ENCODE measurements at regions of chr17 and their contacts with region 1.

Region 1: DNA sequence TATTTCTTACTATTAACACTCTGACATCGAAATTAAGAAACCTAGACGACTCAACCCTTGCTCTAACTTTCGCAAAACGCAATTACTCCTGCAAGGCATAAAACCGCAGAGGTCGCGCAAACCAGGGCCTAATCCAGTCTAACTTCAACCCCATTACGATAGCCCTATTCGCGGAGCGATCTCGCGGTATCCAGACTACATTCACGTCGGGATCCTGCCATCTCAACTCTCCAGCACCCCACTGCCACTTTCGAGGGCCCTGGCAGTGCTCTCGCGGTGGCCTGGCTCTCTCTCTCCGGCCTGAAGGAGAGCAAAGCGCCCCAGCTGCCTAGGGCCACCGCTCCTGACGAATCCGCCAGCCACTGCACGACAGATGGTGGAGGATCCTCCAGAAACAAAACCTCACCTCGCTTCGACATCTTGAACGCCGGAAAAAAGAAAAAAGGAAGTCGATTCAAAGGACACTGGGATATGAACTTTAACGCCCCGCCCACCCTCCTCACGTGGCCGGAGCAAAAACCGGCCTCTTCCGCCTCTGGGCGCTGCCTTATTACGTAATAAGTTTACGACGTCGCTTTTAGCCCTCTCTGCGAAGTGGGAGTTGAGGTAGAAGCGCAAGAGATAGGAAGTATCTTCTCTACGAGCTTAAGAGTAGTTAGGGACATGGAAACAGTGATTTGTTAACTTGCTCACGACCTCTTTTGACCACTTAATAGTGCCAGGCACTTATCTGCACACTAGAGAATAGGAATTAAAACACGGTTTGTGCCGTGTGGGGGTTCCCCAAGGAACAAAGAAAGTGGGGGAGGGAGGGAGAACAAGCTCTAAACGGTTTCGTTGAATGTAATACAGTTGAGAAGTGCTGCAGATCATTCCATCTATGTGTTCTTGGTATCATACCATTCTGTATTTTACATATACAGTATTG is at the start of gene RPL23:
- DNase-seq: peak; percentile 67 to 94 (median 91)
- ATAC-seq: peak; percentile 91
- H3K4me3 ChIP-seq: peak within 1 kb of the TSS; percentile 70
- H3K4me3 Mint-ChIP-seq: peak within 1 kb of the TSS; percentile 82 to 98 (median 96)
- H3K27ac ChIP-seq: peak within 1 kb of the TSS; percentile 89
- H3K27ac Mint-ChIP-seq: peak within 1 kb of the TSS; percentile 96 to 100 (median 99)
- H3K4me1 ChIP-seq: peaks cover 16 to 25% of the 10 kb centered on the region in 2 donors
- H3K4me1 Mint-ChIP-seq: peaks cover 34 to 53% (median 45%) of the 10 kb centered on the region in 7 donors
- H3K27me3 ChIP-seq: no peaks in the 10 kb centered on the region
- H3K27me3 Mint-ChIP-seq: no peaks in the 10 kb centered on the region
- total RNA-seq, gene RPL23: 1,312 to 2,438 (median 1,877) TPM

Region 2: GRCh38 chr17:38761612-38762011 is 91.9 kb before region 1 on chr17:
- CTCF ChIA-PET with region 1: no interaction called
- POLR2A ChIA-PET with region 1: no interaction called
- intact Hi-C with region 1: no loop called
- DNase-seq: peak in 5 of 9 donors; percentile 19 to 32 (median 25)
- ATAC-seq: no peak
- H3K4me3 ChIP-seq: no peak overlapping the region
- H3K4me3 Mint-ChIP-seq: no peak overlapping the region
- H3K27ac ChIP-seq: no peak overlapping the region
- H3K27ac Mint-ChIP-seq: peak overlapping the region in 7 of 9 donors; percentile 24 to 74 (median 54)
- H3K4me1 ChIP-seq: no peaks in the 10 kb centered on the region
- H3K4me1 Mint-ChIP-seq: peaks cover 8 to 14% (median 11%) of the 10 kb centered on the region in 7 donors
- H3K27me3 ChIP-seq: no peaks in the 10 kb centered on the region
- H3K27me3 Mint-ChIP-seq: no peaks in the 10 kb centered on the region

Region 3: DNA sequence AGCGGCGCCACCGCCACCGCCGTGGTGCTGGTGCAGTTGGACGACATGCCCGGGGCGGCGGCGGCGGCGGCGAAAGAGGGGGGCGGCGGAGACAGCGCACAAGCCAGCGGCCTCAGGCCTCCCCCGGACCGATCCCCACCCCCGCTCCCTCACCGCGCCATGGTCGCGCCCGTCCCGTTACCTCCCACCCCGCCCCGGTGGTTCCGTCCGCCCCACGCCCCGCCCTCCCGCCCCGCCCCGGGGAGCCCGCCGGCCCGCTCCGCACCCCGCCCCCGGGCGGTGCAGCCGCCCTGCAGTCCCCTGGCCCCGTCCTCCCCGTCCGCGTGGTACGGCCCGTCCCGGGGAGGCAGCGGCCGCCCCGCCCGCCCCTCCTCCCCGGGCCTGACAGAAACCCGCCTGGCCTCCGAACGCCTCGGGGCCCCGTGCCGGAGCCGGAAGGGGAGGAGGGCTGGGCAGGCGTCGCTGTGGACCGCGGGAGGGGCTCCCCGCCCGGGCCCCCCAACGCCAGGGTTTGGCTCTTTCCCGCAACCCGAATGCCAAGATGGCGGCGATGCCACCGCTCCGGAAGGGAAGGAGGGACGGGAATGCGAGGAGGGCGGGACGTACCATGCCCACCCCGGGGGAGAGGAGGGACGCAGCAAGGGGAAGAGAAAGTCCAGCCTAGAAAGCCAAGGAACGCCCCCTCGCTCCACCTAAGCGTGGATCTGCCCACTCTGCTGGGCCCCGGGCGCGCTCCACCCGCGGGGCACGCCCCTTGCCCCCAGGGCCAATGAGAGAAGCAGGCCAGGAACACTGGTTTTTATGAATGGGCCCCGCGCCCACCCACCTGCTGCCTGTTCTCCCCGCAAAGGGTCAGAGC is 53.9 kb before region 1 on chr17 and contains the start of gene PIP4K2B:
- CTCF ChIA-PET with region 1: interaction called, 5 read pairs
- POLR2A ChIA-PET with region 1: interaction called, 8 read pairs
- intact Hi-C with region 1: loop called (anchors 1 kb)
- DNase-seq: peak; percentile 70 to 88 (median 78)
- ATAC-seq: peak; percentile 87
- H3K4me3 ChIP-seq: peak within 1 kb of the TSS; percentile 93
- H3K4me3 Mint-ChIP-seq: peak within 1 kb of the TSS; percentile 92 to 100 (median 96)
- H3K27ac ChIP-seq: peak within 1 kb of the TSS; percentile 81
- H3K27ac Mint-ChIP-seq: peak within 1 kb of the TSS; percentile 88 to 96 (median 92)
- H3K4me1 ChIP-seq: peaks cover 15 to 21% of the 10 kb centered on the region in 2 donors
- H3K4me1 Mint-ChIP-seq: peaks cover 31 to 48% (median 42%) of the 10 kb centered on the region in 7 donors
- H3K27me3 ChIP-seq: no peaks in the 10 kb centered on the region
- H3K27me3 Mint-ChIP-seq: no peaks in the 10 kb centered on the region
- total RNA-seq, gene PIP4K2B: 32.4 to 67.9 (median 49.1) TPM

Region 4: DNA sequence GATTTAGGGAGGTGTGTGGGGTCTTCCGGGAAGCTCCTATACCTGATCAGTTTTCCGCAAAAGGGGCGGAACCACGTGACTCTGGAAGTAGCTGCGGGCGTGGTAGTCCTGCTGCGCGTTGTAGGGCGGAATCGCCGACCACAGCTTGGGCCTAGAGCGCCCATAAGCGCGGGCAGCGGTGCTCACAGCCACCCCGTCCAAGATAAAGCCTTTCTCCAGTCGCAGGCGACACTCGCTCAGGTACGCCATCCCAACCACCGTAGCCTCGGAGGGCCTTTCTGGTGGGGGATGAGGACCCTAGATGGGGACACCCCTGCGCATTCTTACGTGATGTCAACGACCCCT is 12.4 kb before region 1 on chr17:
- CTCF ChIA-PET with region 1: no interaction called
- POLR2A ChIA-PET with region 1: interaction called, 27 read pairs
- intact Hi-C with region 1: no loop called
- DNase-seq: no peak
- ATAC-seq: peak; percentile 53
- H3K4me3 ChIP-seq: peak overlapping the region; percentile 20
- H3K4me3 Mint-ChIP-seq: peak overlapping the region in 7 of 10 donors; percentile 32 to 75 (median 65)
- H3K27ac ChIP-seq: peak overlapping the region; percentile 15
- H3K27ac Mint-ChIP-seq: peak overlapping the region in 2 of 9 donors; percentile 17 to 52
- H3K4me1 ChIP-seq: no peaks in the 10 kb centered on the region
- H3K4me1 Mint-ChIP-seq: no peaks in the 10 kb centered on the region
- H3K27me3 ChIP-seq: no peaks in the 10 kb centered on the region
- H3K27me3 Mint-ChIP-seq: no peaks in the 10 kb centered on the region

Region 5: DNA sequence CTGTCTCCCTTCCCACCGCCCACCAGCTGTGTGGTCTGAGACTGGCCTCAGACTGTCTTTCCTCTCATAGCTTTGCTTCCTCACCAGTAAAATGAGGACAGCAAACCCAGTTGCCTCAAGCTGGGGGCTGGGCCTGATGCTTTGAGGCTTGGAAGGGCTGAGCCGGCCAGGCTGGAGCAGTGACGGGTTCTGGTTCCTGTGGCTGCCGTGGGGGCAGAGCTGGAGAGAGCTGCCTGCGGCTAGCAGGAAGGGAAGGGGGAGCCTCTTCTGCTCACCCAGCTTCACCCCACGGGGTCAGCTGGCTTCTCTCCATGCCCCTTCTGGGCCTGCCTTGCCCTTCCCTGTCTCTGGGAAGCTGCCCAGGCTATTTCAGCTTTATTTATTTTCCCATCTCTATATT is 40.1 kb after region 1 on chr17:
- CTCF ChIA-PET with region 1: interaction called, 4 read pairs
- POLR2A ChIA-PET with region 1: interaction called, 44 read pairs
- intact Hi-C with region 1: loop called in 1 of 2 experiments (anchors 1 kb)
- DNase-seq: no peak
- ATAC-seq: peak; percentile 40
- H3K4me3 ChIP-seq: no peak overlapping the region
- H3K4me3 Mint-ChIP-seq: peak overlapping the region in 4 of 10 donors; percentile 12 to 72 (median 48)
- H3K27ac ChIP-seq: peak overlapping the region; percentile 52
- H3K27ac Mint-ChIP-seq: peak overlapping the region; percentile 54 to 95 (median 88)
- H3K4me1 ChIP-seq: peaks cover 80 to 90% of the 10 kb centered on the region in 2 donors
- H3K4me1 Mint-ChIP-seq: peaks cover 43 to 89% (median 79%) of the 10 kb centered on the region in 7 donors
- H3K27me3 ChIP-seq: no peaks in the 10 kb centered on the region
- H3K27me3 Mint-ChIP-seq: no peaks in the 10 kb centered on the region

Region 6: DNA sequence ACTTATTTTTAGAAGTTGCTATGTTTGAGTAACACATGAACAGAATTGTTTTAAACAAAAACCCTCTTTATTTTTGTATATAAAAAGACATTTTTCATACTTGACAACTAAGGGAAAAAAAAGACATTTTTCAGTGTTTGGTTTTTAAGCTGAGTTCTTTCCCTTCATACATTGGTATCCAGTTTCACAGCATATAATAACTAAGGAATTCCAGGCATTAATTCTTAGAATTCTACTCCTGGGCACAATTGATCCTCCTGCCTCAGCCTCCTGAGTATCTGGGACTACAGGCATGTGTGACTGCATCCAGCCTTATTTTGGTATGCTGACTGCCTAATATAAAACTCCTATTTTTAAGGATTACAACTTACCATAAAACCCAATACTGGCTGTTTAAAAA is 105.2 kb after region 1 on chr17:
- CTCF ChIA-PET with region 1: no interaction called
- POLR2A ChIA-PET with region 1: interaction called, 12 read pairs
- intact Hi-C with region 1: no loop called
- DNase-seq: no peak
- ATAC-seq: no peak
- H3K4me3 ChIP-seq: no peak overlapping the region
- H3K4me3 Mint-ChIP-seq: no peak overlapping the region
- H3K27ac ChIP-seq: peak overlapping the region; percentile 45
- H3K27ac Mint-ChIP-seq: peak overlapping the region in 6 of 9 donors; percentile 22 to 89 (median 50)
- H3K4me1 ChIP-seq: peaks cover 5 to 41% of the 10 kb centered on the region in 2 donors
- H3K4me1 Mint-ChIP-seq: peaks cover 10 to 45% (median 30%) of the 10 kb centered on the region in 7 donors
- H3K27me3 ChIP-seq: no peaks in the 10 kb centered on the region
- H3K27me3 Mint-ChIP-seq: no peaks in the 10 kb centered on the region